Sciatic nerve (tissue), 2 donors: ENCODE measurements at regions of chr20 and their contacts with region 1.

Region 1: DNA sequence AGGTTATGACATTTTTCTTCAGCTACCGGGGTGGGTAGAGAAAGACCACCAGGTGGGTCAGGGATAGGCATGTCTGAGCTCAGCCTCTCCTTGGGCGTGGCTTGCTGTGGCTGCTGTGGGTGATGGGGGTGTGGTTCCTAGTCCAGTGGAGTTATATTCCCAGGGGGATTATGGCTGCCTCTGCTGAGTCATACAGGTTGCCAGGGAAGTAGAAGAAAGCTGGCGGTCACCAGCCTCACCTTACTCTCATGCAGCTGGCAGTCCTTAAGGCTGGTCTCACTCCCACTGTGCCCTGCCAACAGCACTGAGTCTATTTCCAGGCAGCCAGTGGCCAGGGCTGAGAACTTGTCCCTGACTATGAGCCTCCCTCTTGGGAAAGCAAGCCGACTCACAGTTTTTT is 130.0 kb downstream of the SCP2D1 start:
- DNase-seq: no peak
- ATAC-seq: no peak

Region 2: DNA sequence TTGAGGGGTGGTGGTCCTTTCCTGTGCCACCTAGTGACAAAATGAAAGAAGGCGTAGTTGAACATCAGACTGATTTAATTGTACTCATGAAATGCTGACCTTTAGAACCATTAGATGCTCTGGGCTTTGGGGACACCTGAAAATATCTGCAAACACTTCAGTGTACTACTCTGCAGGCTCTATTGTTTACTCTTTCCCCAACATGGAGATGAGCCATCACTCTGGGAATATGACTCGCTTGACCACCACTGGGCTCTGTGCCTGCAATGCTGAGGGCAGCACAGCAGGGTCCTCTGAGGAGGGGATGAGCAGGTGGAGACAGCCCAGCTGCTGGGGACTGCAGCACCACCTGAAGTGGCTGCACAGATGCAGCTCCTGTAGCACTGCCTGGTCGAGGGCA is 194.1 kb after region 1 on chr20:
- intact Hi-C with region 1: no loop called
- DNase-seq: no peak
- ATAC-seq: no peak

Region 3: GRCh38 chr20:20780127-20780824 is 1836.7 kb after region 1 on chr20:
- intact Hi-C with region 1: loop called (anchors 5 kb)
- DNase-seq: peak; percentile 69
- ATAC-seq: peak; percentile 91